K562 (cell line): ENCODE measurements at regions of chr19 and their contacts with region 1.

Region 1: GRCh38 chr19:57103573-57104277 is 16.1 kb upstream of the USP29 start:
- DNase-seq: peak; percentile 54 to 63 (median 56)
- ATAC-seq: peak; percentile 67; the same call in 2 of the 3 replicates
- H3K4me3 ChIP-seq: no peak overlapping the region
- H3K27ac ChIP-seq: no peak overlapping the region
- H3K4me1 ChIP-seq: no peaks in the 10 kb centered on the region; a peak in 2 of 5 replicates
- H3K27me3 ChIP-seq: no peaks in the 10 kb centered on the region
- CTCF ChIP-seq: peak; percentile 66 to 81 (median 76)
- EP300 ChIP-seq: no peak
- POLR2A ChIP-seq: no peak
- RAD21 ChIP-seq: peak; percentile 57 to 78

Region 2: DNA sequence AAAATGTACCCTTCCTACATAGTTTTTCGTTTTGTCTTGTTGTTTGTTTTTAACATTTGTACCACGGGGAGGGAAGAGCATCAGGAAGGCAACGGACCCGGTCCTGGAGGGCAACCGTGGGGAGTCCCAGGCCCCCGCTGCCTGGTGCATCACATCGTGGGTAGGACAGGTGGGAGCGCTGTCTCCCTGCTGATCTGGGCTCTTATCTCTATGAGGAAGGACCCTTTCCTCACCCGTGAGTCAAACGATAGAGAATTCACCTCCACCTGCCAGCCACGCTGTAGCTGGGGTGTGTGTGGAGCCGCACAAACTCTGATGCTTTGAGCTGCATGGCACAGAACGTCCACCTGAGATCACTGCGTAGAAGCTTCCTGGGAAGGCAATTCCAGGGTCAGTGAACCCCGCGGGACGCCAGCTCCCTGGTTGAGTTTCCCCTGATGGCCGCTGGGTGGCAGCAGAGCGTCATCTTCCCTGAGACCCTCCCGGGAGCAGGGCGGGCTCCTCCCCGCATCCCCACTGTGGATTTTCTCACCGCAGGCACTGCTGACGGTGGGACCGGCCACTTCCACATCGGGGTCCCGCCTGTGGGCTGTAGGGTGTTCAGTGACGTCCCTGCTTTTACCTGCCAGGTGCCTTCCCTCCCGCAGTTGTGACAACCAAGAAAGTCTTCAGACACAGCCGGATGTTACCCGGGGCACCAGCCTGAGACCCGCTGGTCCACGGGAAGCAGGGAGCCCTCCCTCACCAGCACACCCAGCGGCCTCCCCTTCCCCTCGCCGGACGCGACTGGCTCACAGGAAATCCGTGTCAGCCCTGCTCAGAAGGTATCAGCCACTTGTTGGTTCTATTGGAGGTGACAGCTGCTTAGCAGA is 1037.3 kb before region 1 on chr19:
- CTCF ChIA-PET with region 1: no interaction called
- POLR2A ChIA-PET with region 1: no interaction called
- in situ Hi-C with region 1: loop called (anchors 25 kb)
- intact Hi-C with region 1: loop called (anchors 10 kb)
- DNase-seq: peak; percentile 76 to 93 (median 88)
- ATAC-seq: peak; percentile 93
- H3K4me3 ChIP-seq: no peak overlapping the region
- H3K27ac ChIP-seq: no peak overlapping the region
- H3K4me1 ChIP-seq: peaks cover 3 to 7% of the 10 kb centered on the region in 2 experiments; a peak in 4 of 5 replicates
- H3K27me3 ChIP-seq: peaks cover 5 to 11% of the 10 kb centered on the region in 2 experiments; a peak in 1 of 5 replicates
- CTCF ChIP-seq: peak; percentile 82 to 92 (median 84)
- EP300 ChIP-seq: no peak
- POLR2A ChIP-seq: no peak
- RAD21 ChIP-seq: peak; percentile 70 to 85

Region 3: DNA sequence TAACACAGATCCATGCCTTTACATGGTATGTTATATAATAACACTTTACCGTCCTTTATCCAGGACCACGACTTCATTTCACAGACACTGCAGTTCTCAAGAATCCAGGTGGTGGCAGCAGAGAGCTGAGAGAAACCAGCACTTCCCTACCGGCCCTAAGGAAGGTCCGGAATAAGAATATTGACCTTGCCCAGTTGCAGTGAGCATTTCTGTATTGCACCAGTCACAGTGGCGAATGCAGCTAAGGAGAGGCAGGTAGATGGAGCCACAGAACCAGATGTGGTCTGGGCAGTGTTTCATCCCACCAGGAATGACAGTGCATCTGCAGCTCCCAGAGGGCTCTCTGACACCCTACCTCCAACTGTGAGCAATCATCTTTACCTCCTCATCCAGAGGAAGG is 1027.2 kb before region 1 on chr19:
- CTCF ChIA-PET with region 1: no interaction called
- POLR2A ChIA-PET with region 1: no interaction called
- in situ Hi-C with region 1: loop called (anchors 25 kb)
- intact Hi-C with region 1: loop called (anchors 10 kb)
- DNase-seq: peak; percentile 60 to 72 (median 64)
- ATAC-seq: peak; percentile 86
- H3K4me3 ChIP-seq: no peak overlapping the region
- H3K27ac ChIP-seq: no peak overlapping the region
- H3K4me1 ChIP-seq: peaks cover 3 to 12% of the 10 kb centered on the region in 2 experiments; a peak in 4 of 5 replicates
- H3K27me3 ChIP-seq: no peaks in the 10 kb centered on the region
- CTCF ChIP-seq: peak; percentile 84 to 92 (median 85)
- EP300 ChIP-seq: no peak
- POLR2A ChIP-seq: no peak
- RAD21 ChIP-seq: peak; percentile 60 to 84

Region 4: DNA sequence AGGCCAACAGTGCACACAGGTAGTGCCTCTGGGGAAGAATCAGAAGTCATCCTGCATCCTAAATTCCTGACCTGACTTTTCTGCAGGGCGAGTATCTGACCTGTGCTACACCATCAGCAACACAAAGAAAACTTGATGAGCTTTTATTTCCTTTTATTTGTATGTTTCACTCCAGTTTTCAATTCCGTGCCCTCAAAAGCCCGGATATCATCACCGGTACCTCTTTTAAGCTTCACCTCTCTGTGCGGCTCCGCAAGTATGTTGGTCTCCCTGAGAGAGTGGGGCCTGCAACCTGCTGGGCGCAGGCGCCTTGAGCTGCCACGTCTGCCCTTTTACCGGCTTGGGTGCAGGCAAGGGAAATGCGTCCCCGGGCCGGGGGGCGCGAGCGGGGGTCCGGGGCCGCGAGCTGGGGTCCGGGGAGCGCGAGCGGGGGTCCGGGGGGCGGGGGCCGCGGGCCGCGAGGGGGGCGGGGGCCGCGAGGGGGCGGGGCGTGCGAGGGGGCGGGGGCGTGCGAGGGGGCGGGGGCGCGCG is 67.9 kb after region 1 on chr19:
- CTCF ChIA-PET with region 1: no interaction called
- POLR2A ChIA-PET with region 1: no interaction called
- in situ Hi-C with region 1: no loop called
- intact Hi-C with region 1: no loop called
- DNase-seq: peak in 2 of 4 experiments; percentile 6 to 30
- ATAC-seq: no peak
- H3K4me3 ChIP-seq: no peak overlapping the region
- H3K27ac ChIP-seq: no peak overlapping the region
- H3K4me1 ChIP-seq: no peaks in the 10 kb centered on the region; a peak in 1 of 5 replicates
- H3K27me3 ChIP-seq: no peaks in the 10 kb centered on the region
- CTCF ChIP-seq: no peak
- EP300 ChIP-seq: no peak
- POLR2A ChIP-seq: no peak
- RAD21 ChIP-seq: no peak

Region 5: GRCh38 chr19:58154679-58155648 is 1051.2 kb after region 1 on chr19:
- CTCF ChIA-PET with region 1: no interaction called
- POLR2A ChIA-PET with region 1: no interaction called
- in situ Hi-C with region 1: no loop called
- intact Hi-C with region 1: loop called (anchors 10 kb)
- DNase-seq: peak; percentile 79 to 88 (median 82)
- ATAC-seq: peak; percentile 94
- H3K4me3 ChIP-seq: peak overlapping the region; percentile 67
- H3K27ac ChIP-seq: no peak overlapping the region
- H3K4me1 ChIP-seq: peaks cover 0 to 24% of the 10 kb centered on the region in 2 experiments; a peak in 2 of 5 replicates
- H3K27me3 ChIP-seq: no peaks in the 10 kb centered on the region
- CTCF ChIP-seq: peak; percentile 84 to 89 (median 85)
- EP300 ChIP-seq: no peak
- POLR2A ChIP-seq: no peak; the same call in 1 of the 2 replicates
- RAD21 ChIP-seq: peak; percentile 80 to 94